ENCODE measurements at regions of chr13 and their contacts with region 1.

Region 1: GRCh38 chr13:97082461-97083207 is 88.4 kb upstream of the OXGR1 start:
- DNase-seq: no peak
- H3K4me3 ChIP-seq: no peak overlapping the region
- H3K27ac ChIP-seq: no peak overlapping the region
- H3K4me1 ChIP-seq: no peaks in the 10 kb centered on the region
- H3K27me3 ChIP-seq: no peaks in the 10 kb centered on the region
- CTCF ChIP-seq: no peak
- EP300 ChIP-seq: no peak
- POLR2A ChIP-seq: no peak

Region 2: DNA sequence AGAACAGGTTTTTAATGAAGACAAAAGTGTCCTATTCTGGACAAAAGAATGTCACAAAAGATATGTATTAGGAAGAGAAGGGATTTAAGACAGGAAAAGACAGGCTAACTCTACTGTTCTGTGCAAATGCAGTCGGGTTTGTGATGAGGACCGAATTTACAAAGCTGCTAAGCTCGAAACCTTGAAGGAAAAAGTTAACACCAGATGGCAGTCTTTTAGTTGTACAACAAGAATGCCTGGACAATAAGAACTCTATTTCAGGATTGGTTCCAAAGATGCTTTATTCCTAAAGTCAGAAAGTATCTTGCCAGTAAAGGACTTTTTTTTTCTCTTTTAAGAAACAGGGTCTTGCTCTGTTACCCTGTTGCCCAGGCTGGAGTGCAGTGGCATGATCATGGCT is 941.6 kb before region 1 on chr13:
- in situ Hi-C with region 1: no loop called
- intact Hi-C with region 1: no loop called
- DNase-seq: no peak
- H3K4me3 ChIP-seq: no peak overlapping the region
- H3K27ac ChIP-seq: no peak overlapping the region
- H3K4me1 ChIP-seq: no peaks in the 10 kb centered on the region
- H3K27me3 ChIP-seq: no peaks in the 10 kb centered on the region
- CTCF ChIP-seq: peak in 1 of 5 experiments; percentile 10
- EP300 ChIP-seq: no peak
- POLR2A ChIP-seq: no peak

Region 3: DNA sequence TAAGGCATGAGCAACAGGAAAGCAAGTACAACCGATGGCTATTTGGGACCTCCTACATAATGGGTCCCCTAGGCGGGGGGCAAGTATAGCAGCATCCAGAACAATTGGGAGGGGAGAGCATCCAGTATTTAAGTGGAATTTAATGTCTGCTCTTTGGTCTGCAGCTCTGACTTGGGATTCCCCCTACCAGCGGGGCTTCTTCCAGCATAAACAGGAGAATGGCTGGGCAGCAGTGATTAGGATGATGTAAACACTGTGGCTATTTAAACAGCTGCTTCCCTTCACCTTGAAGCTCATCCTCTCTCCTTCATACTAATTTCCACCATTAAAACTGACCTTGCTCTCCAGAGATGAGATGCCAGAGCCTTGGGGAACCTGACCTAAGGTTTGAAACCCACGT is 14.5 kb before region 1 on chr13:
- in situ Hi-C with region 1: no loop called
- intact Hi-C with region 1: loop called (anchors 2 kb)
- DNase-seq: no peak
- H3K4me3 ChIP-seq: no peak overlapping the region
- H3K27ac ChIP-seq: no peak overlapping the region
- H3K4me1 ChIP-seq: no peaks in the 10 kb centered on the region
- H3K27me3 ChIP-seq: peaks cover 4% of the 10 kb centered on the region
- CTCF ChIP-seq: no peak
- EP300 ChIP-seq: no peak
- POLR2A ChIP-seq: no peak

Region 4: DNA sequence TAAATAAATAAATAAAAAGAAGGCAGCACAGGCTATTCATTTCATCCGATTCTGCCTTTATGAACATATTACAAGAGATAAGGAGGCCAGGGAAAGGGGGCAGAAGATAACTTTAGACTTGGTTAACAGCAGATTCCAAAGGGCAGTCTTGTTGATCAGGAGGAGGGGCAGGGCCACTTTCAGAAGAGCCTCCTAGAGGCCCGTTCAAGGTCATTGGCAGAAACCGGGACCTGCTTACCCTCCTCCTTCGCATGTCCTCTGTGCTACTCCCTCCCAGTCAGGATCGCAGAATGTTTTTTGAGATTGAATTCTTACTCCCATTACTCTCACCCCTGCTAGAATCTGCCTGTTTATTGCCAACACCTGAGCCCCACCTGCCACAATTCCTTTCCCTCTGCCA is 653.8 kb after region 1 on chr13:
- in situ Hi-C with region 1: no loop called
- intact Hi-C with region 1: no loop called
- DNase-seq: no peak
- H3K4me3 ChIP-seq: no peak overlapping the region
- H3K27ac ChIP-seq: no peak overlapping the region
- H3K4me1 ChIP-seq: no peaks in the 10 kb centered on the region
- H3K27me3 ChIP-seq: no peaks in the 10 kb centered on the region
- CTCF ChIP-seq: no peak
- EP300 ChIP-seq: no peak
- POLR2A ChIP-seq: no peak